Activated CD4-positive, alpha-beta memory T cell treated with anti-CD3 and anti-CD28 coated beads, Interleukin-2, amount 10 ng/mL, durations not matched to agents 7 days and 5 days (primary cell): ENCODE measurements at regions of chr12 and their contacts with region 1.

Region 1: DNA sequence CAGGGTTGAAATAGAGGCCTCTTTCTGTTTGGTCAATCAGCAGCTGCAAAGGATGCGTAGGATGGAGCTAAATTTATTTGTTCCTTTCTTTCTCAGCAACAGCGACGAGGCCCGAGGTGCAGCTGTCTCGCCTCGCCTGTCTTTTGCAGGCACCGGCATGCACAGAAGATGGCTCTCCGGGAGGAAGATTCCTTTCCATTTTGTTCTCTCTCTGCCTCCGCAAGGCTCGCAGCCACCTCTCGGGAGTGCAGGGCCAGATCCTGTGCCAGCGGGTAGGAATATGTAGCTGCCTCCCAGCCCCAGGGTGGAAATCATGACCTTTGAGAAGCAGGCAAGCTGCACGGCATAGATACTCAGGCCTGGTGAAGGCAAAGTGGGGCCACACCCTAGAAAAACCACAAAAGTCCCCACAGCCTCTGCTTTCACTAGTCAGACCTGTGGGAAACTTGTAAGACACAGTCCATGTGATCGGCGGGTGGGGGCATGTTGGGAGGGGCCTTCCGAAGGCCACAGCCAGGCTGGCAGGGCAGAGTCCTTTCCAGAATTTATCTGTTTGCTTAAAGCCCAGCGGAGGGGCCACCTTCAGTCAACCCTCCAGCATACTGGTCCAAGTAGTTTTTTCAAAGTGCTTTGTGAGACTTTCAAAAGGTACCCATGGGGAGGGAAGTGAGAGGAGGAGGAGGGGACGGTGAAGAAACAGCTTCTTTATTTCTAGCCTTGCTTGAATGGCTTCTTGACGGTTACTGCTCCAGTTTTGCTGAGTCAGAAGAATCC is at the start of gene MAP1LC3B2:
- DNase-seq: peak; percentile 92
- H3K4me3 Mint-ChIP-seq: peak within 1 kb of the TSS; percentile 56
- H3K27ac Mint-ChIP-seq: peak within 1 kb of the TSS; percentile 99
- H3K4me1 Mint-ChIP-seq: peaks cover 33% of the 10 kb centered on the region
- H3K27me3 Mint-ChIP-seq: peaks cover 17% of the 10 kb centered on the region
- total RNA-seq, gene MAP1LC3B2: 0.68 to 0.83 TPM

Region 2: GRCh38 chr12:116276652-116277221 is 282.6 kb before region 1 on chr12:
- CTCF ChIA-PET with region 1: interaction called, 7 read pairs
- POLR2A ChIA-PET with region 1: interaction called, 10 read pairs
- DNase-seq: peak; percentile 75
- H3K4me3 Mint-ChIP-seq: peak overlapping the region; percentile 88
- H3K27ac Mint-ChIP-seq: peak overlapping the region; percentile 84
- H3K4me1 Mint-ChIP-seq: peaks cover 36% of the 10 kb centered on the region
- H3K27me3 Mint-ChIP-seq: peaks cover 8% of the 10 kb centered on the region

Region 3: DNA sequence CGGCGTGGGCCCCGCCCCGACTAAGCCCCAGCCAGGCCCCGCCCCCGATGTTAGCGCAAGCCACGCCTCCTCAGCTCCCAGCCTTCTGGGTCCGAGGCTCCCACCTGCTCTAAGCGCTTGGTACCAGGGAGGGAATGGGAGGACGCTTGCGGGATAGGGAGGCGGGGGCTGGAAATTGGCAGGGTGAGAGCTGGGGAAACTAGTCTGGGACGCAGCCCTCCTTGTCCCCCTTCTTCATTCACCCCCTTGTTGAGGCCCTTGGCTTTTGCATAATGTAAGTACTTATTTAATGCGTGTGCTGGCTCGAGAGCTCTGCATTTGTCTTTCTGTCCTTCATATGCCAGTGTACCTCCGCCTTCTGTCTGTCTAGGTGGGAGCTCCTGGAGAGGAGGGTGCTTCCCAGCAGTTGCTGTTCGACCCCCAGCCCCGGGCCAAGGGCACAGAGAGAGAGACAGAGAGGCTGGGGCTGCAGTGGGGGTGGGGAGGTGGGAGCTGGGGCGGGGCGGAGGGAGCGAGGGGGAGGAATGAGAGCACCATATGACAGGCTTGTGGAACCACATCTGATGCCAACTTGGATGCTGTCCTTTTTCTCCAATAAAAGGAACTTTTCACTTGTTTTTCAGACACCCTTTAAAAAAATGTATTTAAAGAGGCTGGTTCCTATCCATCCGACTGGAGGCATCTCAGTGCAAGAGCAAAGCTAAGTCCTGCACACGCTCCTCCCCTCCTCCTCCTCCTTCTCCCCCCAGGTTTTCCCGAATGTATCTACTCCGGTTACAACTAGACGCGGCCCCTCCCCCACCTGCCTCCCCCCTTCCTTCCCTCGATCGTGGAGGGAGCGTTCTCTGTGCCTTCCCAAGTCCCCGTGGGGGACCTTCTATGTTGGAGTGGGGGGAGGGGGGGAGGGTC is 25.8 kb before region 1 on chr12:
- CTCF ChIA-PET with region 1: interaction called, 7 read pairs
- POLR2A ChIA-PET with region 1: interaction called, 18 read pairs
- DNase-seq: peak; percentile 75
- H3K4me3 Mint-ChIP-seq: peak overlapping the region; percentile 75
- H3K27ac Mint-ChIP-seq: no peak overlapping the region
- H3K4me1 Mint-ChIP-seq: peaks cover 42% of the 10 kb centered on the region
- H3K27me3 Mint-ChIP-seq: peaks cover 13% of the 10 kb centered on the region

Region 4: DNA sequence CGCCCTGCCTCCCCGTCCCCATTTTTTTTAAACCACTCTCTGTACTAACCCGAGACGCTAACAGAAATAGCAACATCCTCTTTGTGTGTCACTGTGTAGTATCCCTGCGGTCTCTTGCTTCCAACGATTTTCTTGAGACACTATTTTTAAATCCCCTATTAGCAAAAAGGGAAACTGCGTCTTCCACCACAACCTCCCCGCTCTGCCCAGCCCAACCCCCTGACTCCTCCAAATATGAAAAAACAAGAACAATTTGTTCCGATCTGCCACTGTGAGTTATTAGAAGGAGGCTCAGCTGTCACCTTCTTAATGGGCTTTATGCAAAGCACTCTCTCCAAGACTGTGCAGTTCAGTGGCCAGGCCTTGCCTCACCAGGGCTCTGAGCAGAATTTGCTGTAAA is 76.1 kb after region 1 on chr12:
- CTCF ChIA-PET with region 1: no interaction called
- POLR2A ChIA-PET with region 1: no interaction called
- DNase-seq: no peak
- H3K4me3 Mint-ChIP-seq: no peak overlapping the region
- H3K27ac Mint-ChIP-seq: no peak overlapping the region
- H3K4me1 Mint-ChIP-seq: no peaks in the 10 kb centered on the region
- H3K27me3 Mint-ChIP-seq: peaks cover 34% of the 10 kb centered on the region